CD4-positive, alpha-beta T cell (primary cell): ENCODE measurements at regions of chr16 and their contacts with region 1.

Region 1: DNA sequence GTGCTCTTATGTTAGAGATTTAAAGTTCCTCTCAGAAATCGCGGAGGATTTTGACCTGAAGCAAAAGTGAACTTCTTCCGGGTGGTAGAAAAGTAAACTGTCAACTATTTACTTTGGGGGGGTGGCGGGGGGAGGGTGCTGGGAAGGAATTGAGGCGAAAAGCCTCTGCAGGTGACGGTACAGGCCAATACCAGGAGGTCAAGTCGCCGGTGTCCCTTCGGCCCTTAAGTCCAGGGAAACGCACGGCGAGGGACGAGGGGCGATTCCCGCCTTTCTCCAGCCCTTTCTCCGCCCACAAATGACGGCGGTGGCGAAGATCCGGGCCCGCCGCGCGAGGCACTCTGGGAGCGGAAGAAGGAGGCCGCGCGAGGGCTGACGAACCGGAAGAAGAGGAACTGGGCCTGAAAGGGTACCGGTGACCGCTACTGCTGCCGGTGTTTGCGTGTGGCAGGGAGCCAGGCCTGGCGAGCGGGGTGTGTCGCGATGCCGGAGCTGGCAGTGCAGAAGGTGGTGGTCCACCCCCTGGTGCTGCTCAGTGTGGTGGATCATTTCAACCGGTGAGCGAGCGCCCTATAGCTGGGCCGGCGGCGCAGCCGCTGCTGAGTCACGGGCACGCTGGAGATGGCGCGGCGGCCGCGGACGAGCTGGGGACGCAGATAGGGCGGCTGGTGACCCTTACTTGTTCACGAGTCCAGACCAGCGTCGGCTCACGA is at the start of gene PSMD7:
- DNase-seq: peak; percentile 77 to 94 (median 84)
- ATAC-seq: peak; percentile 90
- H3K4me3 ChIP-seq: peak within 1 kb of the TSS; percentile 86
- H3K4me3 Mint-ChIP-seq: peak within 1 kb of the TSS; percentile 98
- H3K27ac ChIP-seq: peak within 1 kb of the TSS; percentile 96 to 98
- H3K27ac Mint-ChIP-seq: peak within 1 kb of the TSS; percentile 96
- H3K4me1 ChIP-seq: peaks cover 21% of the 10 kb centered on the region
- H3K4me1 Mint-ChIP-seq: peaks cover 42% of the 10 kb centered on the region
- H3K27me3 ChIP-seq: no peaks in the 10 kb centered on the region
- H3K27me3 Mint-ChIP-seq: no peaks in the 10 kb centered on the region
- CTCF ChIP-seq: no peak
- total RNA-seq, gene PSMD7: 123 to 127 TPM

Region 2: DNA sequence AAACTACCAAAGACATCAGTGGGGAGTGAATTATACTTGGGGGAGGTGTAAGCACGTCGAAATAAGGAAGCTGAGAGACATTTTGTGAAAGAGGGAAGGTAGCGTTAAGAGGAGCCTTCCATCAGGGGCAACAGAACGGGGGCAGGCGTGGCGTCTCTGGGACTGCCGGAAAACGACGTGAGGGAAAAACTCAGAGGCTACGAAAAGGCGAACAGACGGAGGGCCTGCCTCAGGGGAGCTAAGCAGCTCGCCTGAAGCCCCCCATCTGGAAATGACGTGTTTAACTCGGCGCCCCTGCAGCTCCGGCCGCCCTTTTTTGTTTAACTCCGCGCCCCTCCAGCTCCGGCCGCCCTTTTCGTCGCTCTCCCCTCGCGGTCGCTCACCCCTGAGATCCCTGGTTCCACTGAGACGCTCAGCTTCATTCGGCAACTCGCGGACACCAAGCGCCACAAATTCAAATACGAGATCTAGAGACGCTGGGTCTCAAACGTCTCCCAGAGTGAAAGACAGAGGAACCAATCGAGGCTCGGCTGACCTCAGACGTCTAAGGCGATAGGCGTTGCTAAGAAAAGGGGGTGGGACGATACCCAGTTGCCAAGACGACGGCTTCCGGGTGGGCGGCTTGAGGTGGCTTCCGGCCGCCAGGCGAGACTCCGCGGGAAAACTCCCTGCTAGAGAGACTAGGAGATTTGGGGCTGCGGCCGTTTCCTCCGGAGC is 1631.9 kb before region 1 on chr16:
- CTCF ChIA-PET with region 1: no interaction called
- POLR2A ChIA-PET with region 1: no interaction called
- intact Hi-C with region 1: loop called in 1 of 2 experiments (anchors 10 kb)
- DNase-seq: peak; percentile 84 to 98 (median 90)
- ATAC-seq: peak; percentile 99
- H3K4me3 ChIP-seq: peak overlapping the region; percentile 77
- H3K4me3 Mint-ChIP-seq: peak overlapping the region; percentile 98
- H3K27ac ChIP-seq: peak overlapping the region; percentile 54 to 59
- H3K27ac Mint-ChIP-seq: peak overlapping the region; percentile 85
- H3K4me1 ChIP-seq: peaks cover 9% of the 10 kb centered on the region
- H3K4me1 Mint-ChIP-seq: peaks cover 15% of the 10 kb centered on the region
- H3K27me3 ChIP-seq: no peaks in the 10 kb centered on the region
- H3K27me3 Mint-ChIP-seq: no peaks in the 10 kb centered on the region
- CTCF ChIP-seq: no peak

Region 3: DNA sequence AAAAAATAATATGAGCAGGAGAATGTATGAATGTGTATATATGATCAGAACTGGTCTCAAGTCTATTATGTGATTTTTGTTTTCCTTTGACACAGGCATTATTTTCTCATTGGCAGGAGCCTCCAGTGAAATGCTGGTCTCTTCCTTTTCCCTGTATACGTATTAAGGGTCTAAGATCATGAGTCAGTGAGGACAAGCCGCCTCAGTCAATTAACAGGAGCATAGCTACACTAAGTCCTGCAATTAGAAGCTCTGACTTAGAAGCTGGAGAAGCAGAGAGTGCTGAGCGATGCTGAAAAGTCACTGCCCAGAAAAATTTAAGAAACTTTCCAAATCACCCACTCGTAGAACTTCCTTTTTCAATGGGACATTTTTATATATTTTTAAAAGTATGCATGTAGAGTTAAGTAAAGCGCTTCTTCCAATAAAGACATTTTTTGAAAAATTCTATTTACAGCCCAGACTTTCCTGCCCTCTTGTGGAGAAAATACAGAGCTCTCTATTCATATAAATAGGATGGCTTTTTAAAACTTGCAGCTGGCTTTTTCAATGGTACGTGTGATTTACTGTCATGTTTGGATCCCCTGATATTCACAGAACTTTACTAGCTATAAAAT is 70.1 kb before region 1 on chr16:
- CTCF ChIA-PET with region 1: no interaction called
- POLR2A ChIA-PET with region 1: no interaction called
- intact Hi-C with region 1: no loop called
- DNase-seq: no peak
- ATAC-seq: no peak
- H3K4me3 ChIP-seq: no peak overlapping the region
- H3K4me3 Mint-ChIP-seq: no peak overlapping the region
- H3K27ac ChIP-seq: no peak overlapping the region
- H3K27ac Mint-ChIP-seq: no peak overlapping the region
- H3K4me1 ChIP-seq: no peaks in the 10 kb centered on the region
- H3K4me1 Mint-ChIP-seq: no peaks in the 10 kb centered on the region
- H3K27me3 ChIP-seq: no peaks in the 10 kb centered on the region
- H3K27me3 Mint-ChIP-seq: peaks cover 7% of the 10 kb centered on the region
- CTCF ChIP-seq: no peak

Region 4: DNA sequence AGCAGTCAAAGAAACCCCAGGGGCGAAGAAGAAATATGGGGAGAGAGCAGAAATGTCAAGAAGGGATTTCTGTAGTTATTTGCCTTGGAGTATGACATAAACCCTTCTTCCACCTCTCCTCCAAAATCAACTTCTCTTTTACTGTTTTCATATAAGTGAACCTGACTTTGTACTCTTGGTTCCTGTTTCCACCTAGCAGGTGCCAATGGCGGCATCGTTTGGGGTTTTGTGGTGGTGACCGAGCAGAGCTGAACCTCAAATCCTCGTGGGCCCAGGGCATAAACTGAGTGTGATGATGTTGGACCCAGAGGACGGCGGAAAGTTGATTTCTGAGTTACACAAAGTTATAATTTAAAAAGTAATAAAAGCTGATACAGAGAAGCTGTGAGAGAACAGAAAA is 39.5 kb before region 1 on chr16:
- CTCF ChIA-PET with region 1: no interaction called
- POLR2A ChIA-PET with region 1: no interaction called
- intact Hi-C with region 1: no loop called
- DNase-seq: no peak
- ATAC-seq: no peak
- H3K4me3 ChIP-seq: no peak overlapping the region
- H3K4me3 Mint-ChIP-seq: no peak overlapping the region
- H3K27ac ChIP-seq: no peak overlapping the region
- H3K27ac Mint-ChIP-seq: no peak overlapping the region
- H3K4me1 ChIP-seq: no peaks in the 10 kb centered on the region
- H3K4me1 Mint-ChIP-seq: no peaks in the 10 kb centered on the region
- H3K27me3 ChIP-seq: peaks cover 0 to 10% of the 10 kb centered on the region in 2 experiments
- H3K27me3 Mint-ChIP-seq: peaks cover 9% of the 10 kb centered on the region
- CTCF ChIP-seq: no peak

Region 5: DNA sequence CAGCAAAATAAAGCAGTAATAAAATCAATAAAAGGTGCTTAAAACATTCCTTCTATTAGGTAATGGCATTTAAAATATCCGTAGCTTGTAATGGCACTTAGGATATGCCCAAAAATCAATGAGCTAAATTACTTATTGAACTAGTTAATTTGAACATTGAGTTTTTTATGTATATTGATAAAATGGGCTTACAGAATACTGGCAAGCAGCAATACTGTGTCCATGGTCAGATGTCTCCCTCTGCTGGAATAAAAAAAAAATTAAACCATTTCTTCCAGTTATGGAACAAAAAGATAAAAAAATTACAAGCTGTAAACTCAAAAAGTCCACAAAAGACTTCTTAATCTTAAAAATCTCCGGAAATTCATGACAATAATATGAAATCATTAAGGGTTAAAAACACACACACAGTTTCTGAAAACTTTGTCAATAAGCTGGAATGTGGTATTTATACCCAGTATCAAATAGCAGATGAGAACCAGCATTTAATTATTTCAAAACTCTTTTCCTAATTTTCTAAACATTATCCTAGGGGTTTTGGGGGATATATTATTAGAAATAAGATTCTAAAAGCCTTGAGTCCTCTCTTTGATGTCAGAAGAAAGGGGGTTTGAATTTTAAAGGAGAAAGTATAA is 21.5 kb before region 1 on chr16:
- CTCF ChIA-PET with region 1: no interaction called
- POLR2A ChIA-PET with region 1: no interaction called
- intact Hi-C with region 1: no loop called
- DNase-seq: peak in 1 of 14 experiments; percentile 10
- ATAC-seq: no peak
- H3K4me3 ChIP-seq: no peak overlapping the region
- H3K4me3 Mint-ChIP-seq: no peak overlapping the region
- H3K27ac ChIP-seq: no peak overlapping the region
- H3K27ac Mint-ChIP-seq: no peak overlapping the region
- H3K4me1 ChIP-seq: no peaks in the 10 kb centered on the region
- H3K4me1 Mint-ChIP-seq: no peaks in the 10 kb centered on the region
- H3K27me3 ChIP-seq: peaks cover 4 to 12% of the 10 kb centered on the region in 2 experiments
- H3K27me3 Mint-ChIP-seq: peaks cover 31% of the 10 kb centered on the region
- CTCF ChIP-seq: peak; percentile 16

Region 6: DNA sequence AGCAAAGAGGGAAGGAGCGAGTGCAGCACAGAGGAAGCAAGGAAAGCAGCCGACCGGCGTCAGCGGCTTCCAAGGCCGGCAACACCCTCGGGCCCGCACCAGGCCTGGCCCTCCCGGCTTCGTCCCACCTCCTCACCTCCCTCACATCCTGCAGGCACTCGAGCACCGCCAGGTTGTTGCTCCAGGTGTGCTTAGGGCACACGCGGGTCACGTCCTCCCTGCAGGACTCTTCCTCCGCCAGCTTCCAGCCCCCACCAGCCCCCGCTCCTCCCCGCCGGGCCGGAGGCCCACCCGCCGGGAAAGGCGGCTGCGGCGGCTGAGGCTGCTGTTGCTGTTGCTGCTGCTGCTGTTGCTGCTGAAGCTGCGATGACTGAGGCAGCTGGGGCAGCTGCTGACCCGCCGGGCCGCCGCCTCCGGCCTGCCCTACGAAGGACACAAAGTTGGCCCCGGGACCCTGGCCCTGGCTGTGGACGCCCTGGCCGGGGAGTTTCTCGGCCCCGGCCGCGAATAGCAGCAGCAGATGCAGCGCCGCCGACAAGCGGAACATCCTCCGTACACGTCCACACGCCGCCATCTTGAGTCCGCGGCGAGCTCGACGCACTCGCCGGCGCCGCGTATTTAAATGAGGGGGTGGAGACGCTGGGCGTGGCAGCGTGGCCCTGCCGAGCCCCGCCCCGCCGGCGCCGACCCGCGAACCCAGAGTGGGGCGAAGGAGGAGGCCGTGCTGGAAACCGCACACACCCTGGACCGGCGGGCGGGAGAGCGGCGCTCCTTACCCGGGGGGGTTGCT is 310.1 kb after region 1 on chr16 and contains the start of gene GLG1:
- CTCF ChIA-PET with region 1: no interaction called
- POLR2A ChIA-PET with region 1: interaction called, 3 read pairs
- intact Hi-C with region 1: loop called (anchors 5 kb)
- DNase-seq: peak; percentile 82 to 96 (median 88)
- ATAC-seq: peak; percentile 88
- H3K4me3 ChIP-seq: peak within 1 kb of the TSS; percentile 92
- H3K4me3 Mint-ChIP-seq: peak within 1 kb of the TSS; percentile 95
- H3K27ac ChIP-seq: peak within 1 kb of the TSS; percentile 85 to 91
- H3K27ac Mint-ChIP-seq: peak within 1 kb of the TSS; percentile 95
- H3K4me1 ChIP-seq: peaks cover 62% of the 10 kb centered on the region
- H3K4me1 Mint-ChIP-seq: peaks cover 62% of the 10 kb centered on the region
- H3K27me3 ChIP-seq: no peaks in the 10 kb centered on the region
- H3K27me3 Mint-ChIP-seq: no peaks in the 10 kb centered on the region
- CTCF ChIP-seq: no peak
- total RNA-seq, gene GLG1: 110 to 114 TPM

Region 7: GRCh38 chr16:74666425-74667254 is 370.1 kb after region 1 on chr16 and contains the start of gene RFWD3:
- CTCF ChIA-PET with region 1: no interaction called
- POLR2A ChIA-PET with region 1: interaction called, 12 read pairs
- intact Hi-C with region 1: loop called in 1 of 2 experiments (anchors 5 kb)
- DNase-seq: peak; percentile 91 to 99 (median 94)
- ATAC-seq: peak; percentile 99
- H3K4me3 ChIP-seq: peak within 1 kb of the TSS; percentile 93
- H3K4me3 Mint-ChIP-seq: peak within 1 kb of the TSS; percentile 99
- H3K27ac ChIP-seq: peak within 1 kb of the TSS; percentile 69 to 72
- H3K27ac Mint-ChIP-seq: peak within 1 kb of the TSS; percentile 95
- H3K4me1 ChIP-seq: peaks cover 38% of the 10 kb centered on the region
- H3K4me1 Mint-ChIP-seq: peaks cover 44% of the 10 kb centered on the region
- H3K27me3 ChIP-seq: no peaks in the 10 kb centered on the region
- H3K27me3 Mint-ChIP-seq: no peaks in the 10 kb centered on the region
- CTCF ChIP-seq: no peak
- total RNA-seq, gene RFWD3: 44.9 to 47.0 TPM

Region 8: GRCh38 chr16:75148311-75149195 is 852.0 kb after region 1 on chr16 and contains the start of gene ZFP1:
- CTCF ChIA-PET with region 1: no interaction called
- POLR2A ChIA-PET with region 1: no interaction called
- intact Hi-C with region 1: loop called in 1 of 2 experiments (anchors 5 kb)
- DNase-seq: peak; percentile 91 to 96 (median 93)
- ATAC-seq: peak; percentile 91
- H3K4me3 ChIP-seq: peak within 1 kb of the TSS; percentile 82
- H3K4me3 Mint-ChIP-seq: peak within 1 kb of the TSS; percentile 94
- H3K27ac ChIP-seq: peak within 1 kb of the TSS; percentile 80 to 88
- H3K27ac Mint-ChIP-seq: peak within 1 kb of the TSS; percentile 88
- H3K4me1 ChIP-seq: peaks cover 9% of the 10 kb centered on the region
- H3K4me1 Mint-ChIP-seq: peaks cover 22% of the 10 kb centered on the region
- H3K27me3 ChIP-seq: no peaks in the 10 kb centered on the region
- H3K27me3 Mint-ChIP-seq: no peaks in the 10 kb centered on the region
- CTCF ChIP-seq: no peak
- total RNA-seq, gene ZFP1: 6.2 to 7.5 TPM